Head of caudate nucleus (tissue), 42 donors: ENCODE measurements at regions of chr11 and their contacts with region 1.

Region 1: DNA sequence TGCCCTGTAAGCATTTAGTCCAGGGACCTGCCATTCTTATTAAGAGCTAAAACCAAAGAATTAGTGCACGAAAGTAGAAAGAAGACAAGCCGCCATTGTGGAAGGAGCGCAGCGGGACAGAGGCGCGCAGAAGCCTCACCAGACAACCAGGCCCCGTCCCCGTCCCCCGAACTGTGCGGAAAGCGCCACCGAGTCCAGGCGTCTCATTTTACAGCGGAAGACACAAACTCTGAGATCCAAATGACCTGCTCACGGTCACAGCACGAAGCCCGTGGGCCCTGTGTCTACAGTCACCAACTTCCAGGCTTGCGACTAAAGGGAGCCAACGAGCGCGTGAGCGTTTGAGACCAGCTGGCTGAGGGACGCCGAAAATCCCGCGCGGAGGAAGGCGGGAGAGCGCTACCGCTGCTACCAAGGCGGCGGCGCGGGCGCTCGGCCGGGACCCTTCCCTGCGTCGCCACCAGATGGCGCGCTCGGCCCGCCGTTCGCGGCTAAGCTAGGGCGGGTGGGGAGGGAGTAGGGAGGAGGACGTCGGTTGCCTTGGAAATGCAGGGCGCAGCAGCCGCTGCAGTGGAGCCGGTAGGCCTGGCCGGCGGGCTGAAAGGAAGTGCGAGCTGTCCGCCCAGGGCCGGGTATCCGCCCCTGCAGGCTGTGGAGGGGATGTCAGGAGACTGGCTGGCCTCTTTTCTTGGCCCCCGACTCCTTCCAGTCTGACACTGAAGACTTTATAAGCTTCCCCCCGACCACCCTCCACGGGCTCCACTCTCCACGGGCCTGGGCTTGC is 434 bp upstream of the CCDC83 start:
- DNase-seq: peak; percentile 76 to 95 (median 88)

Region 2: DNA sequence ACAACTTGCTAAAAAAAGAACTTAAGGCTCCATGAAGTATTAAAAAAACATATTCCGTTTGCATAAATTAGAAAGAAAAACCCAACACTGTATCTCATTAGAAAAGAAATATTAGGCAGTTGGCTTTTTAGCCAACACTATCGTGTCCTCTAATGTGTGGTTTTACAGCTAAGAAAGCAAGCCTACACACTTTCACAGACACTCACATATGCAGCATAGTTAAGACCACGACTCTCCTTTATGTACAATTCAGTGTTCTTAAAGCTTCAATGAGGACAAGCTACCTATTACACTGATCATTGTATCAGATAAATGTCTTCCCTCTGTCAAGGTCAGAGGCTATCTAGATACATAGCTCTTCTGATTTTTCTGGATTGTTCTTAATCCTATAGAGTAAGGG is 134.0 kb after region 1 on chr11:
- intact Hi-C with region 1: no loop called
- DNase-seq: no peak

Region 3: DNA sequence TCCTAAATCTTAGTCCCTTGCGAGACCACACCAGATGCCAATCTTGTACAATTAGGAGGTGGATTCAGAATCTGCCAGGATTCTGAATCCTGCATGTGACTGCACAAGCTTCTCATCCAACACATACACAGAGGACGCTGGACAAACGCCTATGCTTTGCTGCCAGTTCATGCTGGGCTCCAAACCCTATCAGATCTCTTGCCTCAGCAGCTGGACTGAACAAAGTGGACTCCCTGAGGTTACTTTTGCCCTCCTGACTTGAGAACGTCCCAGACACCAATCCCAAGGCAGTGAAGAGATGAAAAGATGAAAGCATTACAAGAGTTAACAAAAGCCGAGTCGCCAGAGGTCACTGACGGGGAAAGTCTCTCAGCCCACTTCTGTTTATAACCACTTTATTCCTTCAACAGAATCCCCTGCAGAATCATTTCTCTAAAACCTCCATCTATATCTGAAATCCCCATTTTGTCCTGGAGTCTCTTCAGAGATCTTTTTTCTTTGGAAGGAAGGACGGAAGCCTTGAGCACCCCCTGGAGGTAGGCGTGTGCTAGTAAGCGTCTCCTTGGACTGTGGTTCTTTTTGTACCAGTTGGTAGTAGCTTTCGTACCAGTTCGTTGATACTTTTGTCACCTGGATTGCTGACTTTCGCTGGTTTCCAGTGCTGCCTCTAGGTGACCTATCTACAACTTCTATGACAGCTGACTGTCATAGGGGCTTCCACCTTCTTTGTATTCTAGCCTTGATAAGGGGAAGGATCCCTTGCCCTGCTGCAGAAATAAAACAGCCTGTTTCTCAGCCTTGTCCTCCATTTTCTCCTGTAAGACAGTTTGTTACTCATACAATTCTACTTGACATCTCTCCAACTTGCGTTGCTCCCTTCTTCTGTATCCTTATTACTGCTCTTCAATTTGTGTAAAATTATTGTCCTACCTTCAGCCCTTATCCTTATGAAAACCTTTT is 363.7 kb after region 1 on chr11:
- intact Hi-C with region 1: loop called (anchors 10 kb)
- DNase-seq: peak; percentile 17 to 90 (median 74)

Region 4: DNA sequence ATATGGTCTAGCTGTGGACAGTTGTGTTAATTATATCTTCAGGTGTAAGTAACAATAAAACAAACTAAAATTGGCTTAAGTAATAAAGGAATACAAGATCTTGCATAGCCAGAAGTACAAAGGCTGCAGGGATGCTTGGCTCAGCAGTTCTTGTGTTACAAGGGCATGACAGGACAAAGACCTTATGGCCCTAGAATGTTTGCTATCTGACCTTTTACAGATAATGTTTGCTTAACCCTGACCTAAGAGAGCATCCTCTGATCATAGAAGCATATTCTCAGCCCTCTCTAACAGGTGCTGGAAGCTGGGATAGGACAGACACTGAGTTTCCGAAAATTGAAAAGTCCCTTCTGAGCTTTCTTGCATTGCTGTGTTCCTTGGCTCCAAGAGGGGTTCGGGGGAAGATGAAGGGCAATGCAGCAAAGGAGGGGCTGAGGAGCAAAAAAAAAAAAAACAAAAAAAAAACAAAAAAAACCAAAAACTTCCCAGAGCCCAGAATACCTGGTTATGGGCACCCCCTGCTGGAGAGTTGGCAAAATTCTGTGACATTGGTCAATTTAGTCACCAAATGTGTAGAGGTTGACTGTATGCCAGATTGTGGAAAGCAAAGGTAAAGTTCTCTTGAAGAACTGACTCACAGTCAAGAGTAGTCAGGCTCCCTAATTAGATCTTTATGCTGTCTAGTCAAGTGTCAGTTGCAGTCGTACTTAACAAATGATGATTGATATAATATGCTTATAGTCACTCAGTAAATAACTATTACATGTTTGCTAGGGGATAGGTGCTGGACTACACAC is 436.9 kb after region 1 on chr11:
- intact Hi-C with region 1: loop called (anchors 10 kb)
- DNase-seq: peak in 37 of 42 donors; percentile 15 to 80 (median 53)